PC-3 (cell line): ENCODE measurements at regions of chr10 and their contacts with region 1.

Region 1: GRCh38 chr10:96129387-96130325 is at the start of gene ZNF518A:
- DNase-seq: peak; percentile 43
- ATAC-seq: peak; percentile 64
- H3K4me3 ChIP-seq: peak within 1 kb of the TSS; percentile 70
- H3K27ac ChIP-seq: peak within 1 kb of the TSS; percentile 39
- H3K4me1 ChIP-seq: peaks cover 9% of the 10 kb centered on the region; the same call in 1 of the 2 replicates
- H3K27me3 ChIP-seq: peaks cover 21% of the 10 kb centered on the region
- CTCF ChIP-seq: no peak
- total RNA-seq, gene ZNF518A: 0.69 TPM in 2 replicates

Region 2: DNA sequence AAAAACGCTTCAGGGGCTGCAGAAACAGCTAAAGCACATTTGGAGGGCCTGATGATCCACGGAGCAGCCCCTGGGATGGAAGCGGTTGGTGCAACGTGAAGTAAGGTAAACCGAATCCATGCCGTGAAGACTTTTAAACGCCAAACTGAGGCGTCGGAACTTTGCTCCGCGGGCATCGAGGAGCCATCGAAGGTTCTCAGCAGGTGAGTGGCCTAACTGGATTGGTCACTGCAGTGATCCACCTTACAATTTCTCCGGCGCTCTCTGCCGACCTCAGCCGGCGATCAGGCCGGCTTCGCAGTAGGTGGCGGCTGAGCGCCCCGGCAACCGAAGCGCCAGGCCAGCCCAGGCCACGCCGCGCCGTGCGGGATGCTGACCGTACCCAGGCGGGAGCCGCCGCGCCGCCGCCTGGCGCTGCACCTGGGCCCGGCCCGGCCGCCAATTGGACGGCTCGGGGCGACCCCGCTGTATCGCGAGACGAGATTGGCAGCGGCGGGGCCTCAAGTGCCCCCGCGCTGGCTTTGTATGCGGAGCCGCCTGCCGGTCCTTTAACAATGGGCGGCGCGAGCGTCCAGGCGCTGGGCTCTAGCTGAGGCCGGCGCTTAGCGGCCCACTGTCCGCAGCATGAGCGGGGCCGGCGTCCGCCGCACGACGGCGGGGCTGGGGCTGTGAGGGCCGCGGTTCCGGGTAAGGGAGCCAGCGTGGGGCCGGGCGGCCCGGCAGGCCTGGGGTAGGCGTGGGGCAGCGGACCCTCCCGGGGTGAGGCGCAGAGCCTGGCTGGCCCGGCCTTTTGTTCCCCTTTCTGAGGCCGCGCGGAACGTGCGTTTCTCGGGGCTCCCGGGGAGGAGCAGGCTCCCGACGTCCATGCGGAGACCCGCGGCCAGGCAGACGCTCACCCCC is 86.4 kb before region 1 on chr10 and contains the start of gene CCNJ:
- CTCF ChIA-PET with region 1: no interaction called
- POLR2A ChIA-PET with region 1: no interaction called
- intact Hi-C with region 1: loop called (anchors 5 kb)
- DNase-seq: peak; percentile 87
- ATAC-seq: peak; percentile 81
- H3K4me3 ChIP-seq: peak within 1 kb of the TSS; percentile 79
- H3K27ac ChIP-seq: peak within 1 kb of the TSS; percentile 17
- H3K4me1 ChIP-seq: peaks cover 16% of the 10 kb centered on the region
- H3K27me3 ChIP-seq: no peaks in the 10 kb centered on the region
- CTCF ChIP-seq: no peak
- total RNA-seq, gene CCNJ: 3.2 and 3.9 TPM in 2 replicates

Region 3: DNA sequence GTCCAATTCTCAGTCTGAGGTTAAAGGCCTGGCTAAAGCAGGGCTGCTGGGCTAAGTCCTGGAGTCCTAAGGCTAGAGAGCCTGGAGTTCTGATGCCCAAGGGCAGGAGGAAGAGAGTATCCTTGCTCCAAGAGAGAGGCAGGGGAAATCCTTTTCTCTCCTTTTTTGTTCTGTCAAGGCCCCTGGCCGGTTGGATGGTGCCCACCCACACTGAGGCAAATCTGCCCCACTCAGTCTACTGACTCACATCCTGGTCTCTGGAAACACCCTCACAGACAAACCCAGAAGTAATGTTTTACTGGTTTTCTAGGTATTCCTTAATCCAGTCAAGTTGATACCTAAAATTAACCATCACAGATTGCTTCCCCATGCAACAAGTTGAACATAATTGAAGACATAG is 23.4 kb after region 1 on chr10:
- CTCF ChIA-PET with region 1: no interaction called
- POLR2A ChIA-PET with region 1: no interaction called
- intact Hi-C with region 1: no loop called
- DNase-seq: no peak
- ATAC-seq: no peak
- H3K4me3 ChIP-seq: no peak overlapping the region
- H3K27ac ChIP-seq: no peak overlapping the region
- H3K4me1 ChIP-seq: no peaks in the 10 kb centered on the region
- H3K27me3 ChIP-seq: no peaks in the 10 kb centered on the region
- CTCF ChIP-seq: no peak

Region 4: GRCh38 chr10:96208271-96208670 is 78.6 kb after region 1 on chr10:
- CTCF ChIA-PET with region 1: no interaction called
- POLR2A ChIA-PET with region 1: no interaction called
- intact Hi-C with region 1: no loop called
- DNase-seq: no peak
- ATAC-seq: no peak
- H3K4me3 ChIP-seq: no peak overlapping the region
- H3K27ac ChIP-seq: no peak overlapping the region
- H3K4me1 ChIP-seq: no peaks in the 10 kb centered on the region
- H3K27me3 ChIP-seq: peaks cover 53% of the 10 kb centered on the region
- CTCF ChIP-seq: no peak